ENCODE measurements at regions of chr3 and their contacts with region 1.

Region 1: DNA sequence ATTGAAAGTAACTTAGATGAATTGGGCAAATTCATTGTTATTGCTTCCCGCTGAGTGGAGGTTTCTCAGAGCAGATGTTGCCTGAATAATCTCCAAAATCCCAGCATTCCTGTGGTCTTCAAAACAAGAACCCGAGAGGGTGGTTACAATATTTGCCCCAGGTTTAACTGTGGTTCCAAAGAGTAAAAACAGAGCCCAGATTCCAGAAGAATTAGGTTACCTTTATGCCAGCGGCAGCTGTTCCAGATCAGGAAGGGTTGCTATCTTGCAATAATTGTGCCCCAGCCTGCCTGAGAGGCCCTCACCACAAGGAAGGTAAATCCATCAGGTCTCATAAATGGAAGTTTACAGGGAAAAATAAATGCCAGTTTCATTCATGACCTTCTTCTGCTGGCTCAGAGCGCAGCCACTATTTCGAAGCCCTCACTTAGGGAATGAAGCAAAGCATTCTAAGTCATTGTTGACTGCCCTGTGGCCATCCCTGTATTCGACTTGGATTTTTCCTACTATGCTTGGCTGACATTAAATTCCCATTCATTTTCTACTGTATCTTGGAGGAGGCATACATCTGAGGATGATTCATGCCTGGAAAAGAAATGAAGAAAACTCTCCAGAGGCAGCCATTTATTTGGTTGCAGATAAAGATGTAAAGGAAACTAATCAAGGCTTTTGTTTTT is 54.6 kb downstream of the SSUH2 start:
- DNase-seq: no peak
- ATAC-seq: no peak
- H3K4me3 ChIP-seq: no peak overlapping the region
- H3K27ac ChIP-seq: peak overlapping the region; percentile 47
- H3K4me1 ChIP-seq: peaks cover 63% of the 10 kb centered on the region
- H3K27me3 ChIP-seq: no peaks in the 10 kb centered on the region
- CTCF ChIP-seq: no peak

Region 2: DNA sequence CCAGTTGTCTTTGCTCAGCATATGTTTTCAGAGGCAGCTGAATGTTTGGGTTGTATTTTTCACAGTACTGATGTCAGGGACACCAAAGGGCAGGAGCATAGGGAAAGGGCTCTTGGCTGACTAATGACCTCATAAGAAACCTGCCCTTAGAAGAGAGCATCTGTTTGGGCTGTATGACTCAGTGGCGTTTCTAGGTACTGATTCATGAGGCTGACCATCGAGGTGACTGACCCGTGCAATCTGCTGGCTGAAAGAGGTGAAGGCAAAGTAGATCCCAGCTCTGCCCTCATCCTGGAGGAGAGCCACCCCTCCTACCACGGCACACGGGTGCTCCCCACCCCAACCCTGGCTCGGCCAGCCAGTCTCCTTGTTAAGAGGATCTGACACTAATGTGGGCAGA is 80.1 kb before region 1 on chr3:
- intact Hi-C with region 1: loop called (anchors 5 kb)
- DNase-seq: peak; percentile 46 to 78
- ATAC-seq: peak; percentile 91 to 96 (median 92)
- H3K4me3 ChIP-seq: no peak overlapping the region
- H3K27ac ChIP-seq: peak overlapping the region; percentile 85
- H3K4me1 ChIP-seq: peaks cover 90% of the 10 kb centered on the region
- H3K27me3 ChIP-seq: no peaks in the 10 kb centered on the region
- CTCF ChIP-seq: no peak

Region 3: GRCh38 chr3:8519156-8519555 is 70.9 kb before region 1 on chr3:
- intact Hi-C with region 1: loop called in 1 of 2 experiments (anchors 5 kb)
- DNase-seq: no peak
- ATAC-seq: no peak
- H3K4me3 ChIP-seq: no peak overlapping the region
- H3K27ac ChIP-seq: peak overlapping the region; percentile 85
- H3K4me1 ChIP-seq: peaks cover 70% of the 10 kb centered on the region
- H3K27me3 ChIP-seq: no peaks in the 10 kb centered on the region
- CTCF ChIP-seq: no peak

Region 4: GRCh38 chr3:8539419-8539818 is 50.6 kb before region 1 on chr3:
- intact Hi-C with region 1: no loop called
- DNase-seq: no peak
- ATAC-seq: no peak
- H3K4me3 ChIP-seq: no peak overlapping the region
- H3K27ac ChIP-seq: peak overlapping the region; percentile 39
- H3K4me1 ChIP-seq: peaks cover 34% of the 10 kb centered on the region
- H3K27me3 ChIP-seq: no peaks in the 10 kb centered on the region
- CTCF ChIP-seq: no peak

Region 5: DNA sequence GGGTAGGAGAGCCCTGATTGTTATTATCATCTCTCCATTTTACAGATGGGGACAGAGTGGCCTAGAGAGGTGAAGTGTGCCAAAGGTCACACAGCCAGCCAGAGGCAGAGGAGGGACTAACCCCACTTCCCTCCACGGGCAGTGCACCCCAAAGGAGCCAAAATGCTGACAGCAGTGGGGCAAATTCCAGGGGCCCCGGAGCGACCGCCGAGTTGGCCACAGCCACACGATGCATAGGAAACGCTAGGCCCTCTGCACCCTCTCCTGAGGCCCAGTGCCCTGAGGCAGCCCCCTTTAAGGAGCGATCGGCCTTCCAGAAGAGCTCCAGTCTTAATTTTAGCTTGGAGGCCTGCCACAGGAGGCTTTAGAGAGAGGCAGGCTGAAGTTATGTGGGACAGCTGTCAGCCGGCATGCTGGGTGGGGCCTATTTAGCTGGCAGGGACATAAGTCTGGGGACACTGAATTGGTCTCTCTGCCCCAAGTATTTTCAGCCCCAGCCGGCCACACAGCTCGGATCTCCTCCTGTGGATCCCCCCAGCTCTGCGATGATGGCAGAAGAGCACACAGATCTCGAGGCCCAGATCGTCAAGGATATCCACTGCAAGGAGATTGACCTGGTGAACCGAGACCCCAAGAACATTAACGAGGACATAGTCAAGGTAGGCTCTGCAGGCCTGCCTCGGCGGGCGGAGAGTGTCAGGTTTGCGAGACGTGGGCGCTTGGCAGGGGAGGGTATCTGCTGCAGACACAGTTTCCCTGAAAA is 143.5 kb after region 1 on chr3 and contains the start of gene CAV3:
- intact Hi-C with region 1: no loop called
- DNase-seq: peak; percentile 63 to 88
- ATAC-seq: peak; percentile 81 to 90 (median 87)
- H3K4me3 ChIP-seq: peak within 1 kb of the TSS; percentile 70
- H3K27ac ChIP-seq: peak within 1 kb of the TSS; percentile 98
- H3K4me1 ChIP-seq: peaks cover 31% of the 10 kb centered on the region
- H3K27me3 ChIP-seq: no peaks in the 10 kb centered on the region
- CTCF ChIP-seq: no peak
- total RNA-seq, gene CAV3: 36.4 to 71.1 (median 52.5) TPM

Region 6: GRCh38 chr3:8743911-8744310 is 153.9 kb after region 1 on chr3:
- intact Hi-C with region 1: no loop called
- DNase-seq: no peak
- ATAC-seq: no peak
- H3K4me3 ChIP-seq: no peak overlapping the region
- H3K27ac ChIP-seq: no peak overlapping the region
- H3K4me1 ChIP-seq: peaks cover 42% of the 10 kb centered on the region
- H3K27me3 ChIP-seq: no peaks in the 10 kb centered on the region
- CTCF ChIP-seq: no peak

Region 7: DNA sequence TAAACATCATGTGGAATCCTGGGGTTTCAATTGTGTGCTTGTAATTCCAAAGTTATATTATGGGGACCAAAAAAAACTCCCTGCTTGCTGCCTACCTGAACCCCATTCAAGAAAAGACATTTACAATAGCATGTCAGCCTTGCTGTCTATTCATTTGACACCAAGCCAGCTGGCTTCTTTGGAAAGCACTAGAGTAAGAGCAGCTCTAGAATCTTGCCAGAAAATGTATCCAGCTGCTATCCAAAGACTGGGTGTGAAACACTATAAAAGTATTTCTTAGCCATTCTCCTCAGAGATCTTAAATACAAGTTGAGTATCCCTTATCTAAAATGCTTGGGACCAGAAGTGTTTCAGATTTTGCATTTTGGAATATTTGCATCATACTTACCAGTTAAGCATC is 285.8 kb after region 1 on chr3:
- intact Hi-C with region 1: no loop called
- DNase-seq: no peak
- ATAC-seq: no peak
- H3K4me3 ChIP-seq: no peak overlapping the region
- H3K27ac ChIP-seq: no peak overlapping the region
- H3K4me1 ChIP-seq: no peaks in the 10 kb centered on the region
- H3K27me3 ChIP-seq: no peaks in the 10 kb centered on the region
- CTCF ChIP-seq: no peak

Measured in psoas muscle (tissue), 8 donors.